Panc1 (cell line): ENCODE measurements at regions of chr2 and their contacts with region 1.

Region 1: GRCh38 chr2:234550511-234551107 is 53.7 kb upstream of the ARL4C start:
- DNase-seq: peak; percentile 79
- ATAC-seq: peak; percentile 94
- H3K4me3 ChIP-seq: no peak overlapping the region
- H3K27ac ChIP-seq: peak overlapping the region; percentile 70
- H3K4me1 ChIP-seq: peaks cover 13% of the 10 kb centered on the region
- H3K27me3 ChIP-seq: no peaks in the 10 kb centered on the region
- CTCF ChIP-seq: peak; percentile 97

Region 2: DNA sequence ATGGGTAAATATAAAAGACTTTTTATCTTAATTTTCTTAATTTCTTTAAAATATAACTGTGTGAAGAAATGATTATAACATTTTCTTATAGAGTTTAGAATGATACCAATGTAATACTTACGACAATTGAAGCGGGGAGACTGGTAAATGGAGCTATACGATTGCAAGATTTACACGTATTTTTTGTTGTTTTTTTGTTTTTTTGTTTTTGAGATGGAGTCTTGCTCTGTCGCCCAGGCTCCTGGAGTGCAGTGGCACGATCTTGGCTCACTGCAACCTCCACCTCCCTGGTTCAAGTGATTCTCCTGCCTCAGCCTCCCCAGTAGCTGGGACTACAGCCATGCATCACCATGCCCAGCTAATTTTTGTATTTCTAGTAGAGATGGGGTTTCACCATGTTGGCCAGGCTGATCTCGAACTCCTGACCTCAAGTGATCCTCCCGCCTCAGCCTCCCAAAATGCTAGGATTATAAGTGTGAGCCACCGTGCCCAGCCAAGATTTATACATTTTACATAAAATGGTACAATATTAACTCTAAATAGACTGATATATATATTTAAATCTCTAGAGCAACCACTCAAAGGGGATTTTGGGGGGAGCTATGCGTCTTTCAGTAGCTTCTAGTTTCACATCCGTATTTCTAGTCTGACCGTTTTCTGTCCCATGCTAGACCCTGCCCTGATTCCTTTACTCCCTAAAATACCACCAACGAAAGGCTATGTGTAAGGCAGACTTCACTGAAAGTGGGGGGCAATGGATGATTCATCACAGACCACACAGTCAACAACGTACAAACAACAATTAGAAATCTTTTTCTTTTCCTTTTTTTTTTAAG is 1327.3 kb before region 1 on chr2:
- CTCF ChIA-PET with region 1: no interaction called
- POLR2A ChIA-PET with region 1: no interaction called
- in situ Hi-C with region 1: no loop called
- intact Hi-C with region 1: no loop called
- DNase-seq: no peak
- ATAC-seq: no peak
- H3K4me3 ChIP-seq: no peak overlapping the region
- H3K27ac ChIP-seq: no peak overlapping the region
- H3K4me1 ChIP-seq: no peaks in the 10 kb centered on the region
- H3K27me3 ChIP-seq: no peaks in the 10 kb centered on the region
- CTCF ChIP-seq: no peak

Region 3: DNA sequence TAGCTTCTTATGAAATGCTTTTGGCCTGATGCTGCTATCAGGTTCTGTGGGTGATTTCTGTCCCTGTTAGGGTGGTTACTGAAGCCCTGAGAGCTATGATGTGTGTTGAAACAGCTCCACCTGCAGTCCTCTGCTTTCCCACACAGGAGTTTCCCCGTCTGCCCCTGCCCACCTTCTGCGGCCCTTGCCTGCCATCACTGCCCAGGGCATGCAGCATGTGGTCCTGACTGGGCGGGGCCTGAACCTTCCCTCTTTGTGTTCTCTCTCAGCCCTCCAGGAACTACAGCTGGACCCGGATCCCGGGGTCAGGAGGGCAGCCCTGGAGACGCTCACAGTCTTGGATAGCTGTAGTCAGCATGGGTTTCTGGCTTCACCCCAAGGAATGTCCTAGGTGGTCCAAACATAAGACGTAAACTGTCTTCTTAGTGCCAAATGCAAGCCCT is 717.7 kb before region 1 on chr2:
- CTCF ChIA-PET with region 1: no interaction called
- POLR2A ChIA-PET with region 1: interaction called, 26 read pairs
- in situ Hi-C with region 1: no loop called
- intact Hi-C with region 1: no loop called
- DNase-seq: no peak
- ATAC-seq: peak; percentile 87
- H3K4me3 ChIP-seq: 0 out of 4 replicates have a peak overlapping the region, but pooled peaks of 1 of the 2 experiments have one; percentile 8
- H3K27ac ChIP-seq: peak overlapping the region; percentile 83
- H3K4me1 ChIP-seq: peaks cover 45% of the 10 kb centered on the region
- H3K27me3 ChIP-seq: no peaks in the 10 kb centered on the region
- CTCF ChIP-seq: peak; percentile 78

Region 4: GRCh38 chr2:234735829-234736228 is 185.2 kb after region 1 on chr2:
- CTCF ChIA-PET with region 1: interaction called, 17 read pairs
- POLR2A ChIA-PET with region 1: no interaction called
- in situ Hi-C with region 1: no loop called
- intact Hi-C with region 1: no loop called
- DNase-seq: no peak
- ATAC-seq: no peak
- H3K4me3 ChIP-seq: no peak overlapping the region
- H3K27ac ChIP-seq: no peak overlapping the region
- H3K4me1 ChIP-seq: no peaks in the 10 kb centered on the region
- H3K27me3 ChIP-seq: no peaks in the 10 kb centered on the region
- CTCF ChIP-seq: no peak

Region 5: GRCh38 chr2:234951664-234952269 is 401.2 kb after region 1 on chr2 and contains the start of gene SH3BP4:
- CTCF ChIA-PET with region 1: no interaction called
- POLR2A ChIA-PET with region 1: no interaction called
- in situ Hi-C with region 1: no loop called
- intact Hi-C with region 1: loop called (anchors 5 kb)
- DNase-seq: no peak
- ATAC-seq: peak; percentile 84
- H3K4me3 ChIP-seq: peak within 1 kb of the TSS; percentile 64 to 92
- H3K27ac ChIP-seq: peak within 1 kb of the TSS; percentile 99
- H3K4me1 ChIP-seq: peaks cover 39% of the 10 kb centered on the region
- H3K27me3 ChIP-seq: no peaks in the 10 kb centered on the region
- CTCF ChIP-seq: no peak; the same call in 1 of the 2 replicates
- total RNA-seq, gene SH3BP4: 133 TPM

Region 6: GRCh38 chr2:235116885-235117492 is 566.4 kb after region 1 on chr2:
- CTCF ChIA-PET with region 1: interaction called, 4 read pairs
- POLR2A ChIA-PET with region 1: interaction called, 5 read pairs
- in situ Hi-C with region 1: loop called (anchors 25 kb)
- intact Hi-C with region 1: loop called (anchors 1 kb)
- DNase-seq: peak; percentile 25
- ATAC-seq: no peak; the same call in 1 of the 2 replicates
- H3K4me3 ChIP-seq: no peak overlapping the region
- H3K27ac ChIP-seq: peak overlapping the region; percentile 25; the same call in 1 of the 2 replicates
- H3K4me1 ChIP-seq: peaks cover 5% of the 10 kb centered on the region; the same call in 1 of the 2 replicates
- H3K27me3 ChIP-seq: no peaks in the 10 kb centered on the region
- CTCF ChIP-seq: peak; percentile 71; the same call in 1 of the 2 replicates